ENCODE measurements at regions of chr10 and their contacts with region 1.

Region 1: DNA sequence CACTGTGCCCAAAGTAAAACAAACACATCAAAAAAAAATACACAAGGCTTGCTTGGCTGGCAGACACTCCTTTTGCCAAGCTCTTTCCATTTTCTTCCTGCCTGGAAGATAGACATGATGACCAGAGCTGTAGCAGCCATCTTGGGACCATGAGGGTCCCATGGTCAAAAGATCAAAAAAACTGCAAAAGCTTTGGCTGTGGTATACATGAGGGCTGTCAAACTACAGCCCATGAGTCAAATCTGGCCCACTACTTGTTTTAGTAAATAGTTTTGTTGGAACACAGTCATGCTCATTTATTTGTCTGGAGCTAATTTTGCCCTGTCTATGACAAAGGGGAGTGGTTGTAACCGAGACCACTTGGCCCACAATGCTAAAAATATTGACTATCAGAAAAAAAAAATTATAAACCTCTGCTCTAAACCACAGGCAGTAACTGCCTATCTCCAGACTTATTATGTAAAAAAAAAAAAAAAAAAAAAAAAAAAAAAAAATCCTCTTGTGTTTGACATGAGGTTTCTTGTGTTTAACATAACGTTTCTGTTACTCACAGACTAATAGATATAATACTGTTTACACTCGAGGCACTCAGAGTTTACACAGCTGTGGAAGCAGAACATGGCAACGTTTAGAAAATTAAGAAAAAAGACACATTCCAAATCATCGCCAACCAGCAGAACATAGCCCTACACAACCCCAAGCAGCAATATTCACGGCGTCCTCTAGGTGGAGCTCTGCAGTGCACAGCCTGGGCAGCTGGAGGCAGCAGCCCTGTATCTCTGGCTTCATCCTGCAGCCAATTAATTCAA is 36.9 kb downstream of the ASB13 start:
- DNase-seq: peak; percentile 92
- H3K4me3 ChIP-seq: no peak overlapping the region
- H3K27ac ChIP-seq: peak overlapping the region; percentile 47
- H3K4me1 ChIP-seq: peaks cover 4% of the 10 kb centered on the region
- H3K27me3 ChIP-seq: no peaks in the 10 kb centered on the region
- CTCF ChIP-seq: peak; percentile 84

Region 2: GRCh38 chr10:4990217-4990616 is 639.3 kb before region 1 on chr10:
- intact Hi-C with region 1: no loop called
- DNase-seq: no peak
- H3K4me3 ChIP-seq: no peak overlapping the region
- H3K27ac ChIP-seq: no peak overlapping the region
- H3K4me1 ChIP-seq: no peaks in the 10 kb centered on the region
- H3K27me3 ChIP-seq: no peaks in the 10 kb centered on the region
- CTCF ChIP-seq: no peak

Region 3: DNA sequence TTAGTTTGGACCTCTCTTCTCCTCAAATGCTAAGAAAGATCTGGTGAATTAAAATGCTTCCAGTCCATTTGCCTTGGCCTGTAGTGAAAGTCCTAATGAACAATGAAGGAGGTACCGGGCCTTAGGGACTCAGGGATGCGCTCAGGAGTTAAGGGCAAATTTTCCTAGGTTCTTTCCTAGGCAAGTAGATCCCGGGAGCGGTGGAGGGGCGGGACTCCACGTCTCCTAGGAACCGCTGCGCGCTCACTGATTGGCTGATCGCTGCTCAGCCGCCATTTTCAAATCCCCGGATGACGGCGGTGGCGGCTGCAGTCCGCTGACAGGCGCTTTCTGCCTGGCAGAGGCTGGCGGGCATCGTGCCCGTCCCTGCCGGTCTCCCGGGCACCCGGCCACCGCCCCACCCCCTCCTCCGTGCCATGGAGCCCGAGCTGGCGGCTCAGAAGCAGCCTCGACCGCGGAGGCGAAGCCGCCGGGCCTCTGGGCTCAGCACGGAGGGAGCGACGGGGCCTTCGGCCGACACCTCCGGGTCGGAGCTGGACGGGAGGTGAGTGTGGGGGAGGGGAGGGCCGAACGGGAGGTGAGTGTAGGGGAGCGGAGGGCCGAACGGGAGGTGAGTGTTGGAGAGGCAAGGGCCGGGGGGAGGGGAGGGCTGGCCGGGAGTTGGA is 217.1 kb before region 1 on chr10 and contains the start of gene NET1:
- intact Hi-C with region 1: no loop called
- DNase-seq: peak; percentile 91
- H3K4me3 ChIP-seq: peak within 1 kb of the TSS; percentile 79
- H3K27ac ChIP-seq: no peak within 1 kb of the TSS
- H3K4me1 ChIP-seq: no peaks in the 10 kb centered on the region
- H3K27me3 ChIP-seq: no peaks in the 10 kb centered on the region
- CTCF ChIP-seq: no peak
- total RNA-seq, gene NET1: 174 to 455 TPM

Region 4: DNA sequence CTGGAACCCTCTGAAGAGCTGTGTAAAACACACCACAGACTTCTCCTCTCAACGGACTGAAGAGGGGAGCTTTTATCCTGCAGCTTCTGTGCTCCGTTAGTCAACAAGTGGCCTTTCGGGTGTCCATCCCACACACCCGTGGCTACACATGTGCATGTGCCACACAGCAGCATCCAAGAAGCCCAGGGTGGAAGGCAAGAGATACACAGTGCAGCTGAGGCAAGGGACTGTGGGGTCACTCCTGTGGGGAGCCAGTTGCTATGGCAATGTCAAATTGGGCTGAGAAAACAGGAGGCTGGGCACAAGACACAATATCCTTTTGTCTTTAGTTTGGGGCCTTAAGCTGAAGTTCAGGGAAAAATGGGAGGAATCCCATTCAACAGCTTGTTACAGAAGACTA is 188.4 kb before region 1 on chr10:
- intact Hi-C with region 1: loop called (anchors 2 kb)
- DNase-seq: no peak
- H3K4me3 ChIP-seq: no peak overlapping the region
- H3K27ac ChIP-seq: no peak overlapping the region
- H3K4me1 ChIP-seq: peaks cover 3% of the 10 kb centered on the region
- H3K27me3 ChIP-seq: no peaks in the 10 kb centered on the region
- CTCF ChIP-seq: no peak

Region 5: DNA sequence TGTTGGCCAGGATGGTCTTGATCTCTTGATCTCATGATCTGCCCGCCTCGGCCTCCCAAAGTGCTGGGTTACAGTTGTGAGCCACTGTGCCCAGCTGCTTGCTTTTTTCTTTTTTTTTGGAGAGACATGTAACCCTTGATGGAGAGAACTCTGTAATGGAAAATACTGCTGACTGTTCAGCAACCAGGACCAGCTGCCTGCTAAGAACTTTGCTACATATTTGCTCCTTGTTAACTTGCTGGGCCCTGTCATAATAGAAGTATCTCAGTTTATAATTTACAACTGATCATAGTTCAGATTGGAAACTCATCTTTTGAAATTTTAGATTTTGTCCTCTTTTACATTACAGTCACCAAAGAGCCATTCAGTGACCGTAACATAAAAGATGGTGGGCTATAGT is 90.0 kb after region 1 on chr10:
- intact Hi-C with region 1: loop called (anchors 5 kb)
- DNase-seq: no peak
- H3K4me3 ChIP-seq: no peak overlapping the region
- H3K27ac ChIP-seq: no peak overlapping the region
- H3K4me1 ChIP-seq: no peaks in the 10 kb centered on the region
- H3K27me3 ChIP-seq: no peaks in the 10 kb centered on the region
- CTCF ChIP-seq: no peak

Region 6: DNA sequence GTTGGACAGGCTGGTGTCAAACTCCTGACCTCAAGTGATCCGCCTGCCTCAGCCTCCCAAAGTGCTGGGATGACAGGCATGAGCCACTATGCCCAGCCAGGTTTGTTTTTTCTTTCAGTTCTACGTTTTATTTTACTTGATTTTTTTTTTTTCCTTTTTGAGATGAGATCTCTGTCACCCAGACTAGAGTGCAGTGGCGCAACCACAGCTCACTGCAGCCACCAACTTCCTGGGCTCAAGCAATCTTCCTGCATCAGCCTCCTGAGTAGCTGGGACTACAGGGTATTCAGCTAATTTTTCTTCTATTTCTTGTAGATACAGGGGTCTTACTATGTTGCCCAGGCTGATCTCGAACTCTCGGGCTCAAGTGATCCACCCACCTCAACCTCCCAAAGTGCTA is 159.5 kb after region 1 on chr10:
- intact Hi-C with region 1: no loop called
- DNase-seq: no peak
- H3K4me3 ChIP-seq: no peak overlapping the region
- H3K27ac ChIP-seq: no peak overlapping the region
- H3K4me1 ChIP-seq: no peaks in the 10 kb centered on the region
- H3K27me3 ChIP-seq: no peaks in the 10 kb centered on the region
- CTCF ChIP-seq: no peak